ENCODE measurements at regions of chr3 and their contacts with region 1.

Region 1: DNA sequence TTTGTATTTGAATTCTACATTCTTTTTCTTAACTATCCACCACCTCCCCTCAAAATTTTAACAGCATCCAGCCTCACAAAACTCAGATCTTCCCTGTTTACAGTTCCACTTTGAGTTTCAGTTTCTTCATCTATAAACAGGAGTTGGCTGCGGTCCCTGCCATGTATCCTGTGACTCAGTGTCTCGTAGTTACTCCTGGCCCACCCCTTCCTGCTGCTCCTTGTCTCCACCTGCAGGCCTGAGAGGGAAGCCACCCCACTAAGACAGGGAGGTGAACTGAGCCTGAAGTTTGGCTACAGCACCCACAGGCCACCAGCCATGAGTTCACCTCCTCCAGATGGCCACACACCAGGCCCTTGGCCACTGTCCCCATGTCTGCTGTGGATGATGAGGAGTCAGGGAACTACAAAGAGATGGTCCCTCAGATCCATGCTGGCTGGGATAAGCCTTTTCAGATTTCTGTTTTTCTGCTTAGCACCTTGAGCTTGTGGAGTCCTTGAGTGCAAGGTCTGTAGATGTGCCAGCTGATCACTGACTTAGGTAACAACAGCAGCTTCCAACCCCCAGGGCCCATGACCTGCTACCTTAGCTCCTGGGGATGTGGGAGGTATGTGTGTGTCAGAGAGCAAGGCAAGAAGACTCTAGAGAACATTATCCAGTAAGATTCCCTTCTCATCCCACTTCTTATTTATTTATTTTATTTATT is 37.5 kb downstream of the CD86 start:
- DNase-seq: no peak
- ATAC-seq: no peak
- H3K4me3 ChIP-seq: no peak overlapping the region
- H3K27ac ChIP-seq: no peak overlapping the region
- H3K4me1 ChIP-seq: no peaks in the 10 kb centered on the region
- H3K27me3 ChIP-seq: no peaks in the 10 kb centered on the region
- CTCF ChIP-seq: no peak
- POLR2A ChIP-seq: no peak

Region 2: DNA sequence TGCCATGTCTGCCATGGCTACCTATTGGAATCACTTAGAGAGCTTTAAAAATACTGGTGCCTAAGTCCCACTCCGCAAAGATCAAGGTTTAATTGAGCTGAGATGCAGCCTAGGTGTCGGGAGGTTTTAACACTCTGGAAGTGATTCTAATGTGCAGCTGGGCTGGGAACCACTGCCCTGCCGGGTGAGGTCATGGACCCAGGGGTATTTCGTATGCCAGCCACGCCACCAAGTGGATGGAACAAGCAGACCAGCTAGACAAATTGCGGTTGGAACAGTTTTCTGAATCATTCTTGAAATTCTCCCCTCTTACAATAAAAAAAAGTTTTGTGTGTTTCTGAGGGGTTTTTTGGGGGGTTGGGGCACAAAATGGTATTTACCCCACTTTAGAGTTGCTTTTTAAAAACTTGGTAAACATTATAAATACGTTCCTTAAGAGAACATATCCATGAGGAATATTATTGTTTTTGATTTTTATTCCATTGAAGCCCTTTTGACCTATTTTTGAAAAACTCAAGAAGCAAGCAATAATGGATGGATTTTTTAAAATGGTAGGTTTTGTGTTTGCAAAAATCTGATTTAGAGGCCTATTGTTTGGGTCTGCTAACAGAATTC is 166.3 kb after region 1 on chr3:
- in situ Hi-C with region 1: no loop called
- intact Hi-C with region 1: loop called (anchors 10 kb)
- DNase-seq: peak; percentile 10 to 23
- ATAC-seq: peak in 1 of 2 donors; percentile 51
- H3K4me3 ChIP-seq: no peak overlapping the region
- H3K27ac ChIP-seq: no peak overlapping the region
- H3K4me1 ChIP-seq: peaks cover 0 to 5% of the 10 kb centered on the region in 2 donors
- H3K27me3 ChIP-seq: no peaks in the 10 kb centered on the region
- CTCF ChIP-seq: peak in 2 of 5 experiments; percentile 50 to 51
- POLR2A ChIP-seq: no peak

Measured in gastrocnemius medialis (tissue), 4 donors.